ENCODE measurements at regions of chr7 and their contacts with region 1.

Region 1: GRCh38 chr7:26090927-26091519 is 61.0 kb upstream of the NFE2L3 start:
- DNase-seq: no peak
- H3K4me3 ChIP-seq: peak overlapping the region in 1 of 4 experiments; percentile 19; a peak in 1 of 8 replicates
- H3K27ac ChIP-seq: no peak overlapping the region
- H3K4me1 ChIP-seq: peaks cover 0 to 3% (median 3%) of the 10 kb centered on the region in 4 experiments; a peak in 3 of 7 replicates
- H3K27me3 ChIP-seq: no peaks in the 10 kb centered on the region
- CTCF ChIP-seq: peak in 2 of 3 experiments; percentile 63 to 76; a peak in 3 of 4 replicates
- EP300 ChIP-seq: no peak
- POLR2A ChIP-seq: no peak
- RAD21 ChIP-seq: peak; percentile 84 to 87

Region 2: GRCh38 chr7:26061688-26062150 is 29.3 kb before region 1 on chr7:
- CTCF ChIA-PET with region 1: interaction called, 11 read pairs
- POLR2A ChIA-PET with region 1: no interaction called
- DNase-seq: peak; percentile 53 to 87
- H3K4me3 ChIP-seq: no peak overlapping the region
- H3K27ac ChIP-seq: no peak overlapping the region
- H3K4me1 ChIP-seq: peaks cover 0 to 3% (median 2%) of the 10 kb centered on the region in 4 experiments; a peak in 3 of 7 replicates
- H3K27me3 ChIP-seq: no peaks in the 10 kb centered on the region
- CTCF ChIP-seq: peak; percentile 62 to 90 (median 80)
- EP300 ChIP-seq: no peak
- POLR2A ChIP-seq: no peak
- RAD21 ChIP-seq: peak; percentile 76 to 87

Region 3: DNA sequence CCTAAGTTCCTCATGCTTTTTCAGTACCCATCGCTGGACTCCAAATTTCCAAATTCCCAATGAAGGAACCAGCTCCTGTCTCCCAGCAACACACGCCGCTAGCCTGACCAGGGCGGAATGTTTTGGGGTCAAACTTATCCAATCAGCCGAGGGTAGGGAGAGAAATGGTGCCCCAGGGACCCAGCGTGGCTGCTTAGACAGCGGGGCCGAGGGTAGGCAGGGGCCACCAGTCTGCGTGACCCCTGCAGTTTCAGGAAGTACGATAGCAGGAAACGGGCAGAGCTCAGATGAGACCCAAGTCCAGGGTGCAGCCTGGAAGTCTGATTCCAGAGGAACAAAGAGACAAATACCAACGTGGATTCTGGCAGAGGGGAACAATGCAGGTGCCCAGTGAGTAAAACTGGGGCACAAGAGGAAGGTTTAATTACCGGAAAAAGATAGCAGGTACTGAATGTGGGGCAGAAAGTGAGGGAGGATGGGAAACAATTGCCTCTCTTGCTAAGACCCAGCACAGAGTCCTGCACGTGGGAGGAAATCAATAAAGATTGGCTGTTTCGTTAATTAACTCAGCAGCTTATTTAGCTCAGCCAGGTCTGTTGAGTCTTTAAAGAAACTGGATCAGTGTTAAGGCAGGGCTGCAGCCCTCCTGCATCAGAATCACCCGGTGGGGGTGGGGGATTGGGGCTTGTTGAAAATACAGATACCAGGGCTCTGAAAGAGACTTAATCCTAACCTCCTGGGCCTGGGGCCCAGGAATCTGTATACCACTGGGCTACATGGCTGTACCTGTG is 10.5 kb after region 1 on chr7:
- CTCF ChIA-PET with region 1: interaction called, 53 read pairs
- POLR2A ChIA-PET with region 1: interaction called, 8 read pairs
- DNase-seq: peak in 1 of 2 experiments; percentile 61
- H3K4me3 ChIP-seq: peak overlapping the region in 1 of 4 experiments; percentile 7; a peak in 1 of 8 replicates
- H3K27ac ChIP-seq: peak overlapping the region; percentile 53; the same call in 1 of the 2 replicates
- H3K4me1 ChIP-seq: peaks cover 7 to 16% (median 12%) of the 10 kb centered on the region in 4 experiments
- H3K27me3 ChIP-seq: no peaks in the 10 kb centered on the region
- CTCF ChIP-seq: no peak
- EP300 ChIP-seq: no peak
- POLR2A ChIP-seq: no peak; a peak in 1 of 3 replicates
- RAD21 ChIP-seq: 0 out of 4 replicates have a peak, but pooled peaks of 1 of the 2 experiments have one; percentile 2

Region 4: GRCh38 chr7:26127411-26127810 is 36.4 kb after region 1 on chr7:
- CTCF ChIA-PET with region 1: interaction called, 11 read pairs
- POLR2A ChIA-PET with region 1: no interaction called
- DNase-seq: no peak
- H3K4me3 ChIP-seq: no peak overlapping the region
- H3K27ac ChIP-seq: no peak overlapping the region
- H3K4me1 ChIP-seq: no peaks in the 10 kb centered on the region
- H3K27me3 ChIP-seq: no peaks in the 10 kb centered on the region; a peak in 1 of 7 replicates
- CTCF ChIP-seq: no peak
- EP300 ChIP-seq: no peak
- POLR2A ChIP-seq: no peak
- RAD21 ChIP-seq: no peak

Region 5: GRCh38 chr7:26159243-26159642 is 68.2 kb after region 1 on chr7:
- CTCF ChIA-PET with region 1: interaction called, 20 read pairs
- POLR2A ChIA-PET with region 1: interaction called, 15 read pairs
- DNase-seq: no peak
- H3K4me3 ChIP-seq: no peak overlapping the region
- H3K27ac ChIP-seq: no peak overlapping the region
- H3K4me1 ChIP-seq: peaks cover 19 to 37% (median 29%) of the 10 kb centered on the region in 4 experiments
- H3K27me3 ChIP-seq: peaks cover 0 to 7% (median 0%) of the 10 kb centered on the region in 4 experiments; a peak in 2 of 7 replicates
- CTCF ChIP-seq: no peak
- EP300 ChIP-seq: no peak
- POLR2A ChIP-seq: no peak
- RAD21 ChIP-seq: no peak

Region 6: DNA sequence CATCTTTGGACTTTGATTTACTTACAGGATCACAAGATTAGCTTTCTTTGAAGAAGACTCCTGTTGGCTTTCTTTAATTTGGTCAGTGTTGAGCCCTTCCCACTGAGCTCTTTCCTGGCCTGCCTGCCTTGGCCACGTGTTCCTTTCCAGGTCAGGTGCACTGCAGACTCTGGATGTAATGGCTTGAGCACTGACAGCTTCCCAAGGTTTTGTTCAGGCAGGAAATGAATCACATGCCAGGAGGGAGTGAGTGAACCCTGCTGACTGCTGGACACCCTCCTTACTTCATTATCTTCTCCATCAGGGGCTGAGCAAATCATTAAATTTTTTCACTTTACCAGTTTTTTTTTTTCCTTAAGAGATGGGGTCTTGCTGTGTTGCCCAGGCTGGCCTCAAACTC is 230.4 kb after region 1 on chr7:
- CTCF ChIA-PET with region 1: no interaction called
- POLR2A ChIA-PET with region 1: no interaction called
- DNase-seq: no peak
- H3K4me3 ChIP-seq: no peak overlapping the region
- H3K27ac ChIP-seq: no peak overlapping the region
- H3K4me1 ChIP-seq: no peaks in the 10 kb centered on the region; a peak in 1 of 7 replicates
- H3K27me3 ChIP-seq: no peaks in the 10 kb centered on the region
- CTCF ChIP-seq: no peak
- EP300 ChIP-seq: no peak
- POLR2A ChIP-seq: no peak
- RAD21 ChIP-seq: no peak